Activated CD4-positive, alpha-beta memory T cell treated with anti-CD3 and anti-CD28 coated beads, Interleukin-2, amount 10 ng/mL, durations not matched to agents 7 days and 5 days (primary cell): ENCODE measurements at regions of chr10 and their contacts with region 1.

Region 1: DNA sequence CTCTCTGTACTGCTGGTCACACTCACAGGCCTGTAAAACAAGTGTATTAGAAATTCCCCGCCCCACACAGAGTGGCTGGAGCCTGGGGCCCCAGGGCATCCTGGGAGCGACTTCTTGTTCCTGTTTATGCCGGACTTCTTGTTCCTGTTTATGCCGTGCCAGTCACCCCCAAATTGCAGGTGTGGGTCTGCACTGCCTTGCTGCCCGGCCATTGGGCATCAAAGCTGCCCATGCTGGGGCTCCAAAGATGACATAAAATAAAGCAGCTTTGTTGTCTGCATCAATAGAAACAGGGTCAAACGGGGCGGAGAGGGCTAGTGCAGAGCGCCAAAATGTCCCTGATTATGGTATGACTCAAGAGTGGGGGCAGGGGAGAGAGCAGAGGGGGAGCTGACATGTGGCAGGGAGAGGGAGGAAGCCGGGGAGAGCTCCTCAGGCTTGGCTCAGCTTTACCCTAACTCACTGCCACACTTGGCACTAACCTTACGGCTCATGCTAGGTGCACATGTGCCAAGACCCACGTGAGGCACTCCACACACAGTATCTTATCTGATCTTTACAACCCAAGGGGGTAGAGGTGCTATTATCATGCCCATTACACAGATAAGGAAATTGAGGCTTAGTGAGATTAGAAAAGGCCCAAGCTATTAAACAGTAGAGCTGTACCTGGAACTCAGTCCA is 98.4 kb downstream of the PIP4K2A start:
- DNase-seq: peak; percentile 43
- H3K4me3 Mint-ChIP-seq: peak overlapping the region; percentile 72
- H3K27ac Mint-ChIP-seq: peak overlapping the region; percentile 84
- H3K4me1 Mint-ChIP-seq: peaks cover 94% of the 10 kb centered on the region
- H3K27me3 Mint-ChIP-seq: no peaks in the 10 kb centered on the region

Region 2: DNA sequence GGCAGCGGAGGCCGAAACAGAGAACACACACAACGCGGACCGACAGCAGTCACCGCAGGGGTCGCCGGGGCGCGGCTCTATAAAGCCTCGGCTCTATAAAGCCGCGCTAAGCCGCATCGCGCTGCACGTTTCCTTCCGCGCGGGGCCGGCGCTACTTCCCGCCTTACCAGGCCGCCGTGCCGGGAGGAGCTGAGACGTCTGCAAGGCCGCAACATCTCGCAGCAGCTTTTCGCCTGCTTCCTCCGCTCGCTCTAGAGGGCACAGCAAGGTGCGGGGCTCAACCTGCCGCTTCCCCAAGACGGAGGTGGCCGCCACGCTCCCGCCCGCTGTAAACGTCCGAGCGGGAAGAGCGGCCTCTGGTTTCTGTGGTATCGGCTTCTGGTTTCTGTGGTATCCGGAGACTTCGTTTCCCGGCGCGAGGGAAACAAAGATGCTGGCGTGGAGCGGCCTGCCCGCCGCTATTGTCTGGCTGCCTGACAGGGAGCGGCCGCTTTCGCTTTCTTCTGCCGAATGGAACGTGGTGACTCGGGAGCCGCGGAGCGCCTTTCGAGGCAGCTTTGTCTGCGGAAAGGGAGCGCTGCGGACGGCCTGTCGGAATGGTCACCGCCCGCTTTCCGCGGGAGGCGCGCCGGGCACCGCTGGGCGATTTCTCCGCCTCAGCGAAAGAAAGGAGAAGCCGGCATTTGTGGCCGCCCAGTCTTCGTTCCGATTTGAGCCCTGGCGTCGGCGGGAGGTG is 178.9 kb before region 1 on chr10:
- CTCF ChIA-PET with region 1: no interaction called
- POLR2A ChIA-PET with region 1: interaction called, 10 read pairs
- DNase-seq: peak; percentile 88
- H3K4me3 Mint-ChIP-seq: peak overlapping the region; percentile 92
- H3K27ac Mint-ChIP-seq: peak overlapping the region; percentile 95
- H3K4me1 Mint-ChIP-seq: peaks cover 47% of the 10 kb centered on the region
- H3K27me3 Mint-ChIP-seq: peaks cover 2% of the 10 kb centered on the region

Region 3: DNA sequence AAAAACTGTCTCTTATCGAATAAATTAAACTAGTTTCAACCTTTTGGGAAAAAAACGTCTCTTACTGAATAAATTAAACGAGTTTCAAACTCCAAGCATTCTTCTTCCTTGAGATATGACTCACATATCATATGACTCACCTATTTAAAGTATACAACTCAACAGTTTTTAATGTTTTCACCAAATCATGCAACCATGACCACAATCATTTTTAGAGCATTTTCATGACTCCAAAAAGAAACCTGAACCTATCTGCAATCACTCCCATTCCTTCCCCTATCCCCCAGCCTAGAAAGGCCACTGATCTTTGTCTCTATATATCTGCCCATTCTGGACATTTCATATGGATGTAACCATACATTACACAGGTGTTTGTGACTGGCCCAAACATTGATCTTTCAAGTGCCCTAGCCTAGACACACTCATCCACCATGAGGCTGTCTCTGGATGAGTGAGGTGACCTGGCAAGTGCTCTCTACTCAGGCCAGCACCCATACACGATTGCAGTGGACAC is 16.9 kb before region 1 on chr10:
- CTCF ChIA-PET with region 1: interaction called, 4 read pairs
- POLR2A ChIA-PET with region 1: interaction called, 34 read pairs
- DNase-seq: no peak
- H3K4me3 Mint-ChIP-seq: no peak overlapping the region
- H3K27ac Mint-ChIP-seq: peak overlapping the region; percentile 72
- H3K4me1 Mint-ChIP-seq: peaks cover 66% of the 10 kb centered on the region
- H3K27me3 Mint-ChIP-seq: no peaks in the 10 kb centered on the region

Region 4: GRCh38 chr10:22648547-22648961 is 32.6 kb after region 1 on chr10:
- CTCF ChIA-PET with region 1: interaction called, 4 read pairs
- POLR2A ChIA-PET with region 1: interaction called, 12 read pairs
- DNase-seq: no peak
- H3K4me3 Mint-ChIP-seq: peak overlapping the region; percentile 66
- H3K27ac Mint-ChIP-seq: peak overlapping the region; percentile 91
- H3K4me1 Mint-ChIP-seq: peaks cover 91% of the 10 kb centered on the region
- H3K27me3 Mint-ChIP-seq: no peaks in the 10 kb centered on the region

Region 5: GRCh38 chr10:22682237-22683139 is 66.5 kb after region 1 on chr10:
- CTCF ChIA-PET with region 1: interaction called, 4 read pairs
- POLR2A ChIA-PET with region 1: interaction called, 34 read pairs
- DNase-seq: peak; percentile 77
- H3K4me3 Mint-ChIP-seq: peak overlapping the region; percentile 69
- H3K27ac Mint-ChIP-seq: peak overlapping the region; percentile 100
- H3K4me1 Mint-ChIP-seq: peaks cover 86% of the 10 kb centered on the region
- H3K27me3 Mint-ChIP-seq: no peaks in the 10 kb centered on the region